Activated CD4-positive, alpha-beta T cell treated with anti-CD3 and anti-CD28 coated beads, Interleukin-2, amount 10 ng/mL, durations not matched to agents 24 days and 14 days (primary cell): ENCODE measurements at regions of chr19 and their contacts with region 1.

Region 1: GRCh38 chr19:33176670-33177416 is 17.3 kb upstream of the LRP3 start:
- DNase-seq: peak; percentile 99
- H3K4me3 Mint-ChIP-seq: peak overlapping the region; percentile 91
- H3K27ac Mint-ChIP-seq: peak overlapping the region; percentile 99
- H3K4me1 Mint-ChIP-seq: peaks cover 33% of the 10 kb centered on the region
- H3K27me3 Mint-ChIP-seq: peaks cover 11% of the 10 kb centered on the region

Region 2: GRCh38 chr19:32405431-32406161 is 771.2 kb before region 1 on chr19 and contains the start of gene DPY19L3:
- intact Hi-C with region 1: loop called (anchors 10 kb)
- DNase-seq: peak; percentile 98
- H3K4me3 Mint-ChIP-seq: peak within 1 kb of the TSS; percentile 89
- H3K27ac Mint-ChIP-seq: peak within 1 kb of the TSS; percentile 90
- H3K4me1 Mint-ChIP-seq: peaks cover 6% of the 10 kb centered on the region
- H3K27me3 Mint-ChIP-seq: no peaks in the 10 kb centered on the region
- total RNA-seq, gene DPY19L3: 19.1 and 19.5 TPM in 2 replicates

Region 3: DNA sequence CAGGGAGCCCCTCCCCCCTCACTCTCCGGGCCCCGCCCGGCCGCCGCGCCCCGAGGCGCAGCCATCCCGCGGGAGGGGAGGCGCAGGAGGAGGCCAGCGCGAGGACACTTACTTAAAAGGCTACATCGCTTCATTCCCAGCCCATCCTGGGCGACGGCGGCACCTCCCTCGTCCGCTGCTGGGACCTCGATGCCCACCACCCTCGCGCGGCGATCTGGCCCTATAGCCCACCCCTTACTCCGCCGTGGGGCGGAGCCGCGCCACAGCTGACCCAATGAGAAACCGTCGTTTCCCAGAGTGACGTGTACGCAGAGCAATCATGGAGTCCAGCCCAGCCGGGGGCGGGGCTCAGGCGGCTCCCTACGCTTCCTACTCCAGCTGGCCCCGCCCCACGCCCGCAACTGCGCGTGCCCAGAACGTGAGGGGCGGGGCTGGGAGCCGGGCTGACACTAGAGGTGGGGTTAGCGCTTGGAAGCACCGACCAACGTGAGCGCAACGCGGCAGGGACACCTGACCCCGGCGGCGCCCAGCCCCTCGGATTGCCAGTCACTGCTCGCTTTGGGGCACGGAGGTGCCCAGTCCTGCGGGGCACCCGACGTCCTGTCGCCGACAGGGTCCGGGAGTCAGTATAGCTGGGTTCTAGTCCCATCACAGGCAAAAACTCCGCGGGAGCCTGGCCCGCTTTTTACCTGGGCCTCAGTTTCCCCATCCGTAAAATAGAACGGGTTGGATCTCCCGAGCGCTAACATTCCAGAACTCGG is 501.7 kb before region 1 on chr19 and contains the start of gene ANKRD27:
- intact Hi-C with region 1: loop called (anchors 5 kb)
- DNase-seq: peak; percentile 100
- H3K4me3 Mint-ChIP-seq: peak within 1 kb of the TSS; percentile 95
- H3K27ac Mint-ChIP-seq: peak within 1 kb of the TSS; percentile 88
- H3K4me1 Mint-ChIP-seq: peaks cover 24% of the 10 kb centered on the region
- H3K27me3 Mint-ChIP-seq: peaks cover 28% of the 10 kb centered on the region
- total RNA-seq, gene ANKRD27: 34.2 and 35.1 TPM in 2 replicates

Region 4: DNA sequence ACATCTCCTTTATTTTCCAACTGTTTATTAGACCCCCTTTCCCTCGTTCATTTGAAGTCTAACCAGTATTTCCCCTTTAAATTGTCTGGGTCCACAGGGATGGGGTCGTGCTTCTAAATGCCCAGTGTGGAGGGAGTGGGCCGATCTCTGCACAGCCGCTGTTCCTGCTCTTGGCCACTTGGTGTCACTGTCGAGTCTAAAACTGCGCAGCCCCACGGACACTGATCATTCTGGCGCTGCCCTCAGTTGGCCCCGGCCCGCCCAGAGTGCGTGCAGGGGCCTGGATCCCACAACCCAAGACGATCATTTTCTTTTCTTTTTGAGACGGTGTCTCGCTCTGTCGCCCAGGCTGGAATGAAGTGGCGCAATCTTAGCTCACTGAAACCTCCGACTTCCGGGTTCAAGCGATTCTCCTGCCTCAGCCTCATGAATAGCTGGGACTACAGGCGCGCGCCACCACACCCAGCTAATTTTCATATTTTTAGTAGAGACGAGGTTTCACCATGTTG is 32.9 kb before region 1 on chr19:
- intact Hi-C with region 1: loop called (anchors 2 kb)
- DNase-seq: peak; percentile 90
- H3K4me3 Mint-ChIP-seq: no peak overlapping the region
- H3K27ac Mint-ChIP-seq: no peak overlapping the region
- H3K4me1 Mint-ChIP-seq: peaks cover 4% of the 10 kb centered on the region
- H3K27me3 Mint-ChIP-seq: peaks cover 2% of the 10 kb centered on the region

Region 5: DNA sequence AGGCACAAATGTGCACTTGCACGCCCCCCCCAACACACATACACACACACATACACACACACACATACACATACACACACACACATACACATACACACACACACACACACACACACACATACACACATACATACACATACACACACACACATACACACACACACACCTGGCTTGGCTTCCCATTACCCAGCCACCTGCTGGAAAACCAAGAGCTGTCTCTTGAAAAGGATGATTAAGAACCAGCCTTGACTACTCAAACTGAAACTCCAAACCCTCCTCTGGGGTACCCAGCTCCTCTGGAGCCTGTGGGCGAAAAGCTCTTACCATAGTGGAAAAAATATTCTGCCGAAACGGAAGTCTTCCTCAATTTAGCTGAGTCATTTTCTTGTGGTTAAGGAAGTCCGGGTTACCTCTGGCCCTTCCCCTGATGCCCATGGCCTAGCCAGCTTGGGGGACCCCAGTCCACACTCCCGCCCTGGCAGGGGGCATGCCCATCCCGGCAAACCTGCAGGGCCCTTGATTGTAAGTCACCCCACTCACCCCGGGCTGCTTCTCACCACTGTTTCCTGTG is 103.6 kb after region 1 on chr19:
- intact Hi-C with region 1: loop called (anchors 1 kb)
- DNase-seq: peak; percentile 79
- H3K4me3 Mint-ChIP-seq: peak overlapping the region; percentile 2
- H3K27ac Mint-ChIP-seq: peak overlapping the region; percentile 77
- H3K4me1 Mint-ChIP-seq: peaks cover 12% of the 10 kb centered on the region
- H3K27me3 Mint-ChIP-seq: peaks cover 5% of the 10 kb centered on the region

Region 6: GRCh38 chr19:33430674-33431277 is 253.9 kb after region 1 on chr19:
- intact Hi-C with region 1: no loop called
- DNase-seq: peak; percentile 88
- H3K4me3 Mint-ChIP-seq: no peak overlapping the region
- H3K27ac Mint-ChIP-seq: no peak overlapping the region
- H3K4me1 Mint-ChIP-seq: no peaks in the 10 kb centered on the region
- H3K27me3 Mint-ChIP-seq: peaks cover 2% of the 10 kb centered on the region

Region 7: GRCh38 chr19:33795370-33796163 is 618.7 kb after region 1 on chr19:
- intact Hi-C with region 1: loop called (anchors 5 kb)
- DNase-seq: peak; percentile 87
- H3K4me3 Mint-ChIP-seq: peak overlapping the region; percentile 79
- H3K27ac Mint-ChIP-seq: peak overlapping the region; percentile 77
- H3K4me1 Mint-ChIP-seq: peaks cover 1% of the 10 kb centered on the region
- H3K27me3 Mint-ChIP-seq: peaks cover 38% of the 10 kb centered on the region

Region 8: GRCh38 chr19:34540811-34541557 is 1364.1 kb after region 1 on chr19:
- intact Hi-C with region 1: no loop called
- DNase-seq: no peak
- H3K4me3 Mint-ChIP-seq: no peak overlapping the region
- H3K27ac Mint-ChIP-seq: no peak overlapping the region
- H3K4me1 Mint-ChIP-seq: no peaks in the 10 kb centered on the region
- H3K27me3 Mint-ChIP-seq: peaks cover 6% of the 10 kb centered on the region

Region 9: GRCh38 chr19:34661357-34661756 is 1484.5 kb after region 1 on chr19:
- intact Hi-C with region 1: no loop called
- DNase-seq: no peak
- H3K4me3 Mint-ChIP-seq: no peak overlapping the region
- H3K27ac Mint-ChIP-seq: no peak overlapping the region
- H3K4me1 Mint-ChIP-seq: peaks cover 11% of the 10 kb centered on the region
- H3K27me3 Mint-ChIP-seq: peaks cover 1% of the 10 kb centered on the region